Endothelial cell of umbilical vein (primary cell): ENCODE measurements at regions of chr2 and their contacts with region 1.

Region 1: DNA sequence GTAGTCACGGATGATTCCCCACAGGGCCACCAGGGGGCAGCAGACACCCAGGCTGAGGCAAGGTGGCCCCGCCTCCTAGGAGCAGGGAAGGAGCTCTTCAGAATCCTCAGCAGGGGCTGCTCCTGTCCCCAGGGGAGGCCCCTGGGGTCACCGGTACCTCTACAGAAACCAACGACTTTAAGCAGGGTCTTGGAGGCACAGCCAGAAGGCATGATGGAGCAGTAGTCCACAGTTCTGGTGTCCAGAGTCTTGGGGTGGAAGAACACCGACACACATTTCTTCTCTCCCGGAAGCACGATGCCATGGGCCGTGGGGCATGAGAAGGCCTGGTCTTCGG is 11.5 kb downstream of the CFAP65 start:
- DNase-seq: peak; percentile 64
- H3K4me3 ChIP-seq: no peak overlapping the region
- H3K27ac ChIP-seq: no peak overlapping the region
- H3K4me1 ChIP-seq: no peaks in the 10 kb centered on the region
- H3K27me3 ChIP-seq: peaks cover 13 to 14% of the 10 kb centered on the region in 2 experiments
- CTCF ChIP-seq: peak; percentile 85 to 97
- POLR2A ChIP-seq: no peak

Region 2: DNA sequence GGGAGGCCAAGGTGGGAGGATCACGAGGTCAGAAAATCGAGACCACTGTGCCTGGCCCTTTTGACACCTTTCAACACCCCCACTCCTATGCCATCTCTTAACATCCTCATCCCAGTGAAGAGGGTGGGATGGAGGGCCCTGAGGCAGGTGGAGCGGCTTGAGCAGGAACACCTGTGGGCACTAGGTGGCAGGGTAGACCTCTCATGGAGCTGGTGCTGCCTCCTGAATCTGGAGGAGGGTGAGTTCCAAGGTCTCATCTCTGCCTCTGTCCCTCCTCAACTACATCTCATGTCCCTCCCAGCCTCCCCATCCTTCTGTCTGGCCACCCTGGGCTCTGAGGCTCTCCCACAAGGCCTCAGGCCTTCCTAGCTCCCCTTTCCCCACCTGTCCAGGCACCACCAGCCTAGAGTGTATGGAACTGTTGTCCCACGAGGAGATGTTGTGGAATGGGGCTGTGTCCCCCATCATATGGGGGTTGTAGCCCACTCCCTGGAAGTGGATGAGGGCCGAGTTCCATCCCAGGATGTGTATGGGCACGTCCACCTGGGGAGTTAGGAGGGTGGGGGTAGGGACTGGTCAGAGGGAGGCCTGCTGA is 19.5 kb before region 1 on chr2:
- CTCF ChIA-PET with region 1: interaction called, 27 read pairs
- POLR2A ChIA-PET with region 1: no interaction called
- dilution Hi-C with region 1: no loop called
- intact Hi-C with region 1: no loop called
- DNase-seq: no peak
- H3K4me3 ChIP-seq: no peak overlapping the region
- H3K27ac ChIP-seq: no peak overlapping the region
- H3K4me1 ChIP-seq: no peaks in the 10 kb centered on the region
- H3K27me3 ChIP-seq: peaks cover 0 to 2% of the 10 kb centered on the region in 2 experiments
- CTCF ChIP-seq: peak in 1 of 2 donors; percentile 26
- POLR2A ChIP-seq: no peak

Region 3: DNA sequence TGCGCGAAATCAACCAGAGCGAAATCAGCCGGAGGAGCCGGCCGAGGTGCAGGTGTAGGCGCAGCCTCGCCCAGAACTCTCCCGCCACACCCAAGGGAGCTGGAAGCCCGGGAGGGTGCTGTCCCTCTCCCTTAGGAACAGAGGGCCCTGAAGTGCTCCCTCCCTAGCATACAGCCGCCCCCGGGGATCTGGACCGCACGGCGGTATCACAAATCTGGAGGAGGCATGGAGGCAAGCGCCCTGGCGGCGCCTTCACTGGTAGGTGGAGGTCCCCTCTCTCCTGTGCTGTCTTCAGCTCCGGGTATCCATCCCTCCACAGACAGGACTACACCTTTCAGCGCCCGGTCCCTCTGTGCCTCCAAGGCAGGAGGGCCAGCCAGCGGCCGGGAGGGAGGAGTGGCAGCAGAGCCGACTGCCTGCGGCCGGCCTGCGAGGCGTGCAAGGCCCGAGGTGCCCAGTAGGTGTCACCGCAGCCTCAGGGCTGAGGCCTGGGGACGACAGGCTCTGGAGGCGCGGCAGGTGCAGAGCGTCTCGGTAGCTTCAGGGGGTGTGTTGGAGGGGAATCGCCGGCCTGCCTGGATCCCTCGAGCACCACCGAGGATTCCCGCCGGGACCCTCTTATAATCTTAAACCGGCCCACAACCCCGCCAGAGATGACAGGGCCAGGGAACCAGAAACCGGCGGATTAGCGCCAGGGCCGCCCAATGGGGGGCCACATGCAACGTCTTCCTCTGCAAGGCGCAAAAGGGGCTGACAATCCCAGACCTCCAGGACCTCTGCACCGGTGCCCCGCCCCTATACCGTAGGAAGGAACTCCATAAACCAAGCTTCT is 28.1 kb after region 1 on chr2:
- CTCF ChIA-PET with region 1: interaction called, 27 read pairs
- POLR2A ChIA-PET with region 1: no interaction called
- dilution Hi-C with region 1: no loop called
- intact Hi-C with region 1: no loop called
- DNase-seq: peak; percentile 60
- H3K4me3 ChIP-seq: no peak overlapping the region
- H3K27ac ChIP-seq: no peak overlapping the region
- H3K4me1 ChIP-seq: no peaks in the 10 kb centered on the region
- H3K27me3 ChIP-seq: peaks cover 52 to 66% of the 10 kb centered on the region in 2 experiments
- CTCF ChIP-seq: peak; percentile 85 to 94
- POLR2A ChIP-seq: no peak

Region 4: DNA sequence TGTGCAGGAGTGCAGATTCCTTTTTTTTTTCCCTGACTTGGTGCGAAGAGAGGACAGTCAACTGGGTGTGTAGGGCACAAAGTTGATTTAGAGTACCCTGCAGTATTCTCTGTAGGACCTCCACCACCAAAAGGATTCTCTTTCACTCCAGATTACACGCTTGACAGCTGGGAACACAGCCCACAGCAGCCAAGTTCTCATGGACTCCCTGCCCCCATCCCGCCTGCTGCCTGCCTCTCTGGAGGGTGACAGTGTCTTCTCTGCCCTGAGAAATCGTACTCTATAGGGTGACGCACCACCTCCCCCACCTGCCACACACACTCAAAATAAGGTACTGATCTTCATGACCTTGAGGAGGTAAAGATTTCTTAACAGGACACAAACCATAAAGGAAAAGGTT is 57.6 kb after region 1 on chr2:
- CTCF ChIA-PET with region 1: interaction called, 11 read pairs
- POLR2A ChIA-PET with region 1: no interaction called
- dilution Hi-C with region 1: no loop called
- intact Hi-C with region 1: no loop called
- DNase-seq: no peak
- H3K4me3 ChIP-seq: no peak overlapping the region
- H3K27ac ChIP-seq: no peak overlapping the region
- H3K4me1 ChIP-seq: no peaks in the 10 kb centered on the region
- H3K27me3 ChIP-seq: no peaks in the 10 kb centered on the region
- CTCF ChIP-seq: no peak
- POLR2A ChIP-seq: no peak

Region 5: DNA sequence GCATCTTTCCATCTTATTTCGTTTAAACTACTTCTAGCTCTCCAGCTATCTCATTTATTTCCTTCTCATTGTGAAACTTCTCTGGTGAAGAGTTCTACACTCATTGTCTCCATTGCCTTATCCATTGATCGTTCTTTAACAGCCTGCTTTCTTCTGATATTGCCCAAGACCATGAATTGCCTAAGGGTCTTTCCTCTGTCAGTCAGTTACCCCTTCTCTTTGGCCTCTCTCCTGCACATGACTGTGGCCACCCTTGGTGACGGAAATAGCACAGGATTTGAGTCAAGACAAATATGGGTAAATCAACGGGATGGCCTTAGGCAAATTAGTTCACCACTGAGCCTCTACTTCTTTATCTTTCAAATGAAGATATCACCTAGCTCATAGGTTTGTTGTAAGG is 104.2 kb after region 1 on chr2:
- CTCF ChIA-PET with region 1: interaction called, 10 read pairs
- POLR2A ChIA-PET with region 1: no interaction called
- dilution Hi-C with region 1: no loop called
- intact Hi-C with region 1: no loop called
- DNase-seq: no peak
- H3K4me3 ChIP-seq: no peak overlapping the region
- H3K27ac ChIP-seq: no peak overlapping the region
- H3K4me1 ChIP-seq: no peaks in the 10 kb centered on the region
- H3K27me3 ChIP-seq: no peaks in the 10 kb centered on the region
- CTCF ChIP-seq: no peak
- POLR2A ChIP-seq: no peak

Region 6: DNA sequence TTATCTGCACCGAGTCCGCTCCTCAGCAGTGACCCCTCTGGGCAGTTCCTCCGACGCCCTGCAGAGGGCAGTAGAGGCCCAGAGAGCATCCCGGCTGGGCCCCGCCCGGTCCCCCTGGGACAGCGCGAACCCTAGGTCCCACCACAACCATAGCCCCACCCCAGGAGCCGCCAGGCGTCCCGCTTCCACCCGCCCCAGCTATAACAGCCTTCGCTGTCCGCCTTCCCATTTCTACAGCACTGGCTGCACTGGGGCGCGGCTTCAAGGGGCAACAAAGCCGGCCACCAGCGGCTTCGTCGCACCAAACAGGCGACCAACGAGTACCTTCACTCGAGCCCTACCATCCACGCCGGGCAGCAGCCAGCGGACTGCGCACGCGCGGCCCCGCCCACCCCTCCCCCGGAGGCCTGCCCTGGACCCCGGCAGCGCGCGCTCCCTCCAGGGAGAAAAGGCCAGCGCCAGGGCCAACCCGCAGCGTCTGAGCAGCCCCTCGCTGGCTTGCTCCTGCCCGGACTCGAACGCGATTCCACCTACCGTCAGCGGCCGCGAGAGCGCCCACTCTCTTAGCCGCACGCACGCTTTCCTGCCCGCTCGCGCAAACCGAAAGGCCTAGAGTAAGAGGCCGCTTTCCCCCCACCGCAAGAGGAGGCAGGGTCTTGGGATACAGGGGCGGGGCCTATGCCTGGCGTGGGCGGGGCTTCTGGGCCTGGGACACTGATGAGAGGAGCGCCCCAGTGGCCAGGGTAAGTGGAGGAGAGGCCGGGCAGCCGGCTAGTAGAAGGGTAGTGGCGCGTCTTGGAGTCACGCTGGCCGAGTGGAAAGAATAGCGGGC is 130.6 kb after region 1 on chr2 and contains the start of gene NHEJ1:
- CTCF ChIA-PET with region 1: interaction called, 418 read pairs
- POLR2A ChIA-PET with region 1: no interaction called
- dilution Hi-C with region 1: no loop called
- intact Hi-C with region 1: loop called (anchors 1 kb)
- DNase-seq: peak; percentile 96
- H3K4me3 ChIP-seq: peak within 1 kb of the TSS; percentile 24 to 89 (median 41)
- H3K27ac ChIP-seq: no peak within 1 kb of the TSS
- H3K4me1 ChIP-seq: peaks cover 10% of the 10 kb centered on the region
- H3K27me3 ChIP-seq: no peaks in the 10 kb centered on the region
- CTCF ChIP-seq: peak; percentile 96 to 99
- POLR2A ChIP-seq: peak; percentile 76
- total RNA-seq, gene NHEJ1: 12.1 and 12.9 TPM in 2 replicates